Heart left ventricle (tissue), 16 donors: ENCODE measurements at regions of chrX and their contacts with region 1.

Region 1: GRCh38 chrX:120213436-120214265 is 37.0 kb upstream of the ZBTB33 start:
- DNase-seq: peak in 4 of 5 donors; percentile 24 to 42 (median 30)
- ATAC-seq: peak in 3 of 4 donors; percentile 52 to 73 (median 73)
- H3K4me3 ChIP-seq: no peak overlapping the region
- H3K27ac ChIP-seq: no peak overlapping the region
- H3K4me1 ChIP-seq: no peaks in the 10 kb centered on the region
- H3K27me3 ChIP-seq: peaks cover 0 to 10% (median 0%) of the 10 kb centered on the region in 9 donors
- CTCF ChIP-seq: peak; percentile 51 to 78 (median 65)
- POLR2A ChIP-seq: no peak

Region 2: DNA sequence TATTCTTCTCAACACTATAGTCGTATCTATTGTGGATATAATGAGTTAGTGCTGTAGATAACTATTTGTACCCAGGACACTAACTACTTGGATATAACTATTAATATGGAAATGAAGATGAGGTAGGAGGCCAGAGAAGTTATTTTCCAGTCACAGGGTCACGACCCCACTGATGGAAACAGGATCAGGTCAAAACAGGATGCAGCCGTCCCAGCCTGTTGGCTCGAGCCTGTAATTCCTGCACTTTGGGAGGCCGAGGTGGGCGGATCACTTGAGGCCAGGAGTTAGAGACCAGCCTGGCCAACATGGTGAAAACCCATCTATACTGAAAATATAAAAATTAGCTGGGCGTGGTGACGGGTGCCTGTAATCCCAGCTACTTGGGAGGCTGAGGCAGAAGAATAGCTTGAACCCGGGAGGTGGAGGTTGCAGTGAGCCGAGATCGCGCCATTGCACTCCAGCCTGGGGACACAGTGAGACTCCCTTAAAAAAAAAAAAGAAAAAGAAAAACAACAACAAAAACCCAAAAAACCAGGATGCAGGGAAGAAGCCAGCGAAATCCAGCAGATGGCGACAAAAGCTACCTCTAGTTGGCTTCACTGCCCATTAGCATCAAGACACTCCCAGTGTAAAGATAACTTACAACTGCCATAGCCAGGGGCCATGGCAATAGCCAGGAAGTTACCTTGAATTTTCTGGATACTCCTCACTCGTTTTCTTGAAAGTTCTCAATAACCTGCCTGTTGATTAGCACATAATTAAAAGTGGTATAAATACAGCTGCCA is 232.2 kb before region 1 on chrX:
- intact Hi-C with region 1: loop called in 1 of 10 experiments (anchors 10 kb)
- DNase-seq: no peak
- ATAC-seq: no peak
- H3K4me3 ChIP-seq: no peak overlapping the region
- H3K27ac ChIP-seq: no peak overlapping the region
- H3K4me1 ChIP-seq: no peaks in the 10 kb centered on the region
- H3K27me3 ChIP-seq: peaks cover 0 to 24% (median 0%) of the 10 kb centered on the region in 9 donors
- CTCF ChIP-seq: peak in 6 of 12 donors; percentile 11 to 32 (median 28)
- POLR2A ChIP-seq: no peak

Region 3: GRCh38 chrX:120015145-120016067 is 198.2 kb before region 1 on chrX:
- intact Hi-C with region 1: no loop called
- DNase-seq: no peak
- ATAC-seq: no peak
- H3K4me3 ChIP-seq: peak overlapping the region in 9 of 12 donors; percentile 20 to 39 (median 32)
- H3K27ac ChIP-seq: no peak overlapping the region
- H3K4me1 ChIP-seq: peaks cover 0 to 11% (median 0%) of the 10 kb centered on the region in 12 donors
- H3K27me3 ChIP-seq: peaks cover 0 to 61% (median 25%) of the 10 kb centered on the region in 9 donors
- CTCF ChIP-seq: no peak
- POLR2A ChIP-seq: no peak

Region 4: DNA sequence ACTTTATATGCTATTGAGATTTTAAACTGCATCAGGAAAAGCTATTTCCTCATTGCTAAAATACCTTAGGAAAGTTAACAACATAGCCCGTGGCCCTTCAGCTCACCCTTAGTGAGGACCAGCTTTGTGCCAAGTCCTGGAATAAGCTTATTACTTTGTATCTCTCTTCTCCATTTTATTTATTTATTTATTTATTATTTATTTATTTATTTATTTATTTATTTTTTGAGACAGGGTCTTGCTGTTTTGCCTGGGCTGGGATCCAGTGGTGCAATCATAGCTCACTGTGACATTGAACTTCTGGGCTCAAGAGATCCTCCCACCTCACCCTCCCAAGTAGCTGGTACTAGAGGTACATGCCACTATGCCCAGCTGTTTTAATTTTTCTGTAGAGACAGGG is 104.3 kb before region 1 on chrX:
- intact Hi-C with region 1: loop called in 1 of 10 experiments (anchors 10 kb)
- DNase-seq: no peak
- ATAC-seq: no peak
- H3K4me3 ChIP-seq: no peak overlapping the region
- H3K27ac ChIP-seq: no peak overlapping the region
- H3K4me1 ChIP-seq: no peaks in the 10 kb centered on the region
- H3K27me3 ChIP-seq: peaks cover 0 to 3% (median 0%) of the 10 kb centered on the region in 9 donors
- CTCF ChIP-seq: no peak
- POLR2A ChIP-seq: no peak